ENCODE measurements at regions of chr5 and their contacts with region 1.

Region 1: GRCh38 chr5:16690243-16690852 is 73.6 kb upstream of the RETREG1 start:
- DNase-seq: peak; percentile 56
- ATAC-seq: peak; percentile 99
- H3K4me3 Mint-ChIP-seq: no peak overlapping the region
- H3K27ac Mint-ChIP-seq: peak overlapping the region; percentile 87
- H3K4me1 Mint-ChIP-seq: peaks cover 6% of the 10 kb centered on the region; the same call in 1 of the 2 replicates
- H3K27me3 Mint-ChIP-seq: no peaks in the 10 kb centered on the region
- CTCF ChIP-seq: peak; percentile 84

Region 2: GRCh38 chr5:16679863-16680262 is 10.5 kb before region 1 on chr5:
- CTCF ChIA-PET with region 1: interaction called, 17 read pairs
- POLR2A ChIA-PET with region 1: interaction called, 4 read pairs
- DNase-seq: peak; percentile 50
- ATAC-seq: peak; percentile 83
- H3K4me3 Mint-ChIP-seq: no peak overlapping the region
- H3K27ac Mint-ChIP-seq: no peak overlapping the region; the same call in 1 of the 2 replicates
- H3K4me1 Mint-ChIP-seq: no peaks in the 10 kb centered on the region
- H3K27me3 Mint-ChIP-seq: no peaks in the 10 kb centered on the region
- CTCF ChIP-seq: no peak

Region 3: GRCh38 chr5:16736158-16736995 is 46.0 kb after region 1 on chr5:
- CTCF ChIA-PET with region 1: interaction called, 11 read pairs
- POLR2A ChIA-PET with region 1: interaction called, 6 read pairs
- DNase-seq: peak; percentile 56
- ATAC-seq: peak; percentile 19
- H3K4me3 Mint-ChIP-seq: peak overlapping the region; percentile 80
- H3K27ac Mint-ChIP-seq: peak overlapping the region; percentile 99
- H3K4me1 Mint-ChIP-seq: peaks cover 72% of the 10 kb centered on the region
- H3K27me3 Mint-ChIP-seq: no peaks in the 10 kb centered on the region
- CTCF ChIP-seq: no peak

Region 4: GRCh38 chr5:16776611-16777251 is 86.4 kb after region 1 on chr5:
- CTCF ChIA-PET with region 1: interaction called, 19 read pairs
- POLR2A ChIA-PET with region 1: no interaction called
- DNase-seq: peak; percentile 65
- ATAC-seq: peak; percentile 94
- H3K4me3 Mint-ChIP-seq: no peak overlapping the region
- H3K27ac Mint-ChIP-seq: no peak overlapping the region
- H3K4me1 Mint-ChIP-seq: peaks cover 33% of the 10 kb centered on the region
- H3K27me3 Mint-ChIP-seq: no peaks in the 10 kb centered on the region
- CTCF ChIP-seq: peak; percentile 38

Region 5: GRCh38 chr5:16834029-16834428 is 143.7 kb after region 1 on chr5:
- CTCF ChIA-PET with region 1: no interaction called
- POLR2A ChIA-PET with region 1: no interaction called
- DNase-seq: no peak
- ATAC-seq: peak; percentile 34
- H3K4me3 Mint-ChIP-seq: no peak overlapping the region
- H3K27ac Mint-ChIP-seq: no peak overlapping the region
- H3K4me1 Mint-ChIP-seq: peaks cover 17% of the 10 kb centered on the region
- H3K27me3 Mint-ChIP-seq: no peaks in the 10 kb centered on the region
- CTCF ChIP-seq: no peak

Measured in WTC11 (cell line).